Thyroid gland (tissue), 4 donors: ENCODE measurements at regions of chrX and their contacts with region 1.

Region 1: DNA sequence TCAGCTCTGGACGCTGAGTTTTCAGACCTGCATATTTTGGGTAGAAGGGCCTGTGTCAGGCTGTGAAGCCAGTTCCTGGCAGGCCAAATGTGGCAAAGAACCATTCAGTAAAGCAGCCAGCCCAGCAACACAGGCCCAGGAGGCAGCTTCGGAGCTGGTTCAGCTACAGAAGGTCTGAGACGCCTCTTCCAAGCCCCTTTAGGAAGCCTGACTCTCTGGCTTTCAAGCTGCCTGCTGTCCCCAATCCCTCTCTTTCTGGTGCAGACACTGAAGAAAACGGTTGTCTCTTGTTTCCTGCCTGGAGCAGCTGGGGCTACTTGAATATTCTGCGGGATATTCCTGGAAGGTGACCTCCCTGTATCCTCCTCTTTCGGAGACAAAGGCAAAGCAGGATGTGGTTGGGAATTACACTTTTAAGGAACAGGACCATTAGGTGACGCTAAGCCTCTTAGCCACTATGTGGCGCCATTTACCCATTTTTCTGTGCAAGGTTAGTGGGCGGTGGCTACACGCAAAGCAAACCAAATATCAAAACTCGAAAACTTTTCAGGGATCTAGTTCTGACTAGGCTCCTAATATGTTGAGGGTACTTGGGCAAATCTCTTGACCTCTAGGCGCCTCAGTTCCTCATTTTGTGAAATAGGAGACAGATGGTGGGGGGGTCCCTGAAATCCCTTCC is 47.2 kb upstream of the LAS1L start:
- DNase-seq: peak; percentile 51 to 55
- H3K4me3 ChIP-seq: no peak overlapping the region
- H3K27ac ChIP-seq: no peak overlapping the region
- H3K4me1 ChIP-seq: no peaks in the 10 kb centered on the region
- H3K27me3 ChIP-seq: no peaks in the 10 kb centered on the region
- CTCF ChIP-seq: peak in 5 of 6 experiments; percentile 55 to 76 (median 64)
- POLR2A ChIP-seq: no peak

Region 2: DNA sequence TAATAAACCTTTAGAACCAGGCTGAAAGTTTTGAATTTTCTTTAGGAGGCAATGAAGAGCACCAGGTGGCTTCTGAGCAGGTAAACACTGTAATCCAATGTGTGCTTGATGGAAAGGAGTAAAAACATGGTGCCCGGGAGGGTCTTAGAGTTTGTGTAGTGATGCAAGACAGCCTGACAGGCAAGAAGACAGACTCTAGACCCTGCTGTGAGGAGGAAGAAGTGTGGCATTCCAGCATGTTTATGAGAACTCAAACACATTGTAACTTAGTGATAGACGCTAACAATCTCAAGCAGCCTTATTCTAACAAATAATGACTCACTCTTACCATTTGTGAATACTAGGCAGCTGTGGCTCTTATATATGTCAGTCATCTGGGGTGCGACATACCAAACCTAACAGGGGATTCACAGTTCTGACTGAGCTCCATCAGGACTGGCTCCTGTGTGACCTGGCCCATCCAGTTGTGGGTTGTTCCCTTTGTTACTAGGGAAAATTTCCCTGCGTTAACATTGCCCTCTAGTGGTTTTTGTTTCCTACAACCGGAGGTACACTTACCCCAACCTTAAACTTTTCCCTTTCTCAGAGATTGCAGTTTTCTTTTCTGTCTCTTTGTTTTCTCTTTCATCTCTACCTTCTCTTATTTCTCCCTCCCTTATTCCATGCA is 404.3 kb after region 1 on chrX:
- intact Hi-C with region 1: loop called (anchors 2 kb)
- DNase-seq: peak; percentile 3 to 9
- H3K4me3 ChIP-seq: no peak overlapping the region
- H3K27ac ChIP-seq: no peak overlapping the region
- H3K4me1 ChIP-seq: no peaks in the 10 kb centered on the region
- H3K27me3 ChIP-seq: no peaks in the 10 kb centered on the region
- CTCF ChIP-seq: peak in 4 of 6 experiments; percentile 35 to 54 (median 46)
- POLR2A ChIP-seq: no peak

Region 3: GRCh38 chrX:66046612-66047235 is 464.9 kb after region 1 on chrX:
- intact Hi-C with region 1: no loop called
- DNase-seq: no peak
- H3K4me3 ChIP-seq: no peak overlapping the region
- H3K27ac ChIP-seq: no peak overlapping the region
- H3K4me1 ChIP-seq: no peaks in the 10 kb centered on the region
- H3K27me3 ChIP-seq: no peaks in the 10 kb centered on the region
- CTCF ChIP-seq: no peak
- POLR2A ChIP-seq: no peak